ENCODE measurements at regions of chr5 and their contacts with region 1.

Region 1: DNA sequence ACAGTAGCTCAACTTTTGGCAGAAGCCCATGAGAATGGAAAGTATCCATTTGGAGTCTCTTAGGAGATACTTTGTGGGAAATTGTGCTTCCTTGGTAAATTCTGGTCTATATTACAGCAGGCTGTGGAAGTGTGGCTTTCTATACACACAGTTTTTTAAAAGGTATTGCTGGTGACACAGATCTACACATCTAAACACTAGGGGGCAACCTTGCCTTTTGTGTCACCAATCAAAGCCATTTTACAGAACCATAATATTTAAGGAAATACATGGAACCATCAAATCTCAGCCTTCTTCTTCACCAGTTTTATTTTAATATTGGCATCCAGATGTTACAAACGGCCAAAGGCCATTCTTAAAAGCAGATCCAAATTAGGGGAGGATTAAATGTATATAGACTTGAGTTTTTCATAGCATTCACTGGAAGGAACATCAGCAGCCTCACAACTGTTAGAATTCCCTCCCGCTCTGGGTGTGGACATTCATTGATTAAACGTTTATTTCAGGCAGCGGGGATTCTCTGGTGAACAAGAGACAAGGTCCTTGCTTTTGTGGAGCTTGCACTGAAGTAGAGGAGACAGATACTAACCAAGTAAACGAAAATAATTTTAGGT is 132.4 kb upstream of the EPB41L4A start:
- DNase-seq: no peak
- ATAC-seq: peak; percentile 35 to 62

Region 2: GRCh38 chr5:112616812-112617547 is 65.5 kb after region 1 on chr5:
- intact Hi-C with region 1: no loop called
- DNase-seq: no peak
- ATAC-seq: no peak

Region 3: DNA sequence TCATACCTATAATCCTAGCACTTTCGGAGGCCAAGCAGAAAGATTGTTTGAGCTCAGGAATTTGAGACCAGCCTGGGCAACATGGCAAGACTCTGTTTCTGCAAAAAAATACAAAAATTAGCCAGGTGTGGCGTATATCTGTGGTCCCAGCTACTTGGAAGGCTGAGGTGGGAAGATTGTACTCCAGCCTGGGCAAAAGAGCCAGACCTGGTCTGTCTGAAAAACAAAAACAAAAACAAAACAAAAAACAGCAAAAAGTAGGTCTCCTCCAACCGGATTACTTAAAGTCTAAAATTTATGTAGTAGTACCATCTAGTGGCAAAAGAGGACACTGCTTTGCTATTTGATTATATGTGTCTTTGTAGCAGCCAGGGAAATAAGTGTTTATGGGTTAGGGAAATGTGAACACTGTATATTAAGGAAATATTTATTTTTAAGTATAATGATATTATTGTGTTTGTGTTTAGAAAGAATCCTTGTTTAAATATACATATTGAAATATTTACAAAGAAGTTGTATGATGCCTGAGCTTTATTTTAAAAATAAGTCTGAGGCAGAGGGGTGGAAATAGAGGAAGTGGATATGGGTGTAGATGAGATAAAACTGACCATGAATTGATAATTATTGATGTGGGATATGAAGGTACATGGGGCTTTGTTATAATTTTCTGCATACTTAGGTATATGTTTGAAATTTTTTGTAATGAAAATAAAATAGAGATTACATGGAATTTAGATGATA is 206.1 kb after region 1 on chr5:
- intact Hi-C with region 1: loop called (anchors 2 to 5 kb)
- DNase-seq: no peak
- ATAC-seq: peak; percentile 72 to 80

Region 4: GRCh38 chr5:112921833-112922817 is 370.6 kb after region 1 on chr5 and contains the start of gene REEP5:
- intact Hi-C with region 1: loop called in 1 of 2 experiments (anchors 5 kb)
- DNase-seq: peak; percentile 89
- ATAC-seq: peak; percentile 95 to 97
- total RNA-seq, gene REEP5: 105 to 135 TPM

Region 5: DNA sequence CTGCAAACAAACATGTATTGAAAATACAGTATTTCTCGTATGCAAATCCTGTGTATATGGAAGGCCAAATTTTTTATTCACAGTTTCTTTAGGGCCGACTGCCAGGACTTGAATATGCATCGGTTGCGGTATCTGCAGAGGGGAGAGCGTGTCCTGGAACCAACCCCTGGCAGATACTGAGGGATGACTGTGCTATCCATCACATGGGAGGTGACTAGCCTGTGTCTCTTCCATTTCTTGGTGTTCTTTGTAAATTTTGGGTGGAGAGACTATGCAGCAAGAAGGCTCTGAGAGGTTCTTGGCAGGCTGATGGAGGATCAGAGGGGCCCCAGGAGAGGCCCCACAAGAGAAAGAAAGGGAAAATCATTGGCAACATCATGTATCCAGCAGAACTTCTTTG is 1346.2 kb after region 1 on chr5:
- intact Hi-C with region 1: no loop called
- DNase-seq: no peak
- ATAC-seq: no peak